Activated CD4-positive, alpha-beta T cell treated with anti-CD3 and anti-CD28 coated beads, Interleukin-2, amount 10 ng/mL, durations not matched to agents 7 days and 5 days (primary cell): ENCODE measurements at regions of chr5 and their contacts with region 1.

Region 1: DNA sequence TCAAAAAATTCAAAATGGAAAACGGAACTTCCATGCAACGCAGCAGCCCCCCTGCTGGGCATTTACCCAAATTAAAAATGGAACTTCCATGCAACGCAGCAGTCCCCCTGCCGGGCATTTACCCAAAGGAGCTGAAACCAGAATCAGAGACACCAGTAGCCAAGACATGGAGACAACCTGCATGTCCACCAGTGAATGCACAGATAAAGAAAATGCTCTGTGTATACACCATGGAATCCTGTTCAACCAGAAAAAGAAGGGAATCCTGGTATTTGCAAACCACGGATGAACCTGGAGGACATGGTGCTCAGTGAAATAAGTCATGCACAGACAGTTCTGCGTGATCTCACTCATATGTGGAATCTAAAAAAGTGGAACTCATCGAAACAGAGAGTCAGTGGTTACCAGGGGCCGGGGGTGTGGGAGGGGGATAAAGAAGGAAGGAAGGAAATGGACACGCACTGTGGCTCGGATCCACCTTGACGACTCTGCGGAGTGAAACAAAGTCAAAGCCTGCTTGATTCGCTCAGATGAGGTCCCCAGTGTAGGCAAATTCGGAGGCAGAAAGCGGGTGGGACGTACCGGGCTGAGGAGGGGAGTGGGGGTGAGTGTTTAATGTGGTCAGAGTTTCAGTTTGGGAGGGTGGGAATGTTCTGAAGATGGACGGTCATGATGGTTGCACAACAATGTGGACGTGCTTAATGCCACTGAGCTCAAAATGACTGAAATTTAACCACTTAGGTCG is 40.2 kb upstream of the EXOC3 start:
- DNase-seq: peak; percentile 4
- H3K4me3 Mint-ChIP-seq: no peak overlapping the region
- H3K27ac Mint-ChIP-seq: peak overlapping the region; percentile 38
- H3K4me1 Mint-ChIP-seq: peaks cover 45% of the 10 kb centered on the region
- H3K27me3 Mint-ChIP-seq: no peaks in the 10 kb centered on the region

Region 2: DNA sequence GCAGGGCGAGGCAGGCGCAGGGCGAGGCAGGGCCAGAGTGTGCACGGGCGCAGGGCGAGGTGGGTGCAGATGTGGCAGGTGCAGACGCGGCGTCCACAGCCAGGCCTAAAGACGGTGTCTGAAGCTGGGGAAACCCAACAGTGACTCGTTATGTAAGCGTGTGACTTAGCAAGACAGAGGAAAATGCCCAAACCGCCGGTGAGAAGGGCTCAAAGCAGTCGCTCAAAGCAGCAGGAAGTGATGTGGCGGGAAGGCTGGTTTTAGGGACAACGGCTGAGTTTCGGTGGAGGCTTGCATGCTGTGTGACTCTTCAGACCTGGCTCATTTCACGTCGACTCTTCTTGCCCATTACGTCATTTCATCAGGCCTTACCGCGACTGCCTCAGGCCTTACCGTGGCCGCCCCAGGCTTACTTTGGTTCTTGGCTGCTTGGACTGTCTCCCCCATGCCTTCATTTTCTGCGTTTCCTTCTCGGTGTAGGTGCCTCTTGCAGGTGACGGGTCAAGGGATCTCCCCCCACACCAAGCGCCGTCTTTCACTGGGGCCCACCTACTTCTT is 10.3 kb before region 1 on chr5:
- CTCF ChIA-PET with region 1: interaction called, 10 read pairs
- POLR2A ChIA-PET with region 1: no interaction called
- DNase-seq: peak; percentile 92
- H3K4me3 Mint-ChIP-seq: peak overlapping the region; percentile 63
- H3K27ac Mint-ChIP-seq: peak overlapping the region; percentile 89
- H3K4me1 Mint-ChIP-seq: peaks cover 57% of the 10 kb centered on the region
- H3K27me3 Mint-ChIP-seq: no peaks in the 10 kb centered on the region

Region 3: DNA sequence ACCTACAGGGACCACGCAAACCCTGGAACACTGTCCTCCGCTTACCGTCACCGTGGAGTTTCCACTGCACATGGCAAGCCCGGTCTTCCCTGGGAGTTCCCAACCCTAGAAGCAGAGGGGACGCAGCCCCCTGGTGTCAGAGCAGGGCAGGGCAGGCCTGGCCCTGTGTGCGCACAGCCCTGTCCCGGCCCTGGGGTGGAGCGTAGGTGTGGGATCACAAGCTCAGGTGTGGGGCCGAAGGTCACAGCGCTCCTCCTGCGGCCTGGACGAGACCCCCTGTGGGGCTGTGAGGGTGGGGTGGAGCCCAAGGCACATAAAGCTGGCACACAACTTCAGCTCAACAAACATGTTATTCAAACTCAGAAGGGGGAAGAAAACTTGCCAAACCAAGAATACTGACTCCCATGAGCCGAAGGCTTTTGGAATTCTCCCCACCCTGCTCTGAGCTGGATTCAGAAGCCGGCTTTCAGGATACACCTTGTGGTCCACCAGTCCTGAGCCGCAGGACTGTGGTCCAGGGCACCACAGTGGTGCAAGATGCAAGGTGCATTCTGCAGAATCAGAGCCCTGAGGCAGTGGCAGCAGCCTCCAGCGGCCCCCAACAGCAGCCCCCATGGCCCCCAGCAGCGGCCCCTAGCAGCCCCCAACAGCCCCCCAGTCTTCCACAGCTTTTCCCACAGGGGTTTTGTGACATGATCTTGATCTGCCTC is 28.4 kb after region 1 on chr5:
- CTCF ChIA-PET with region 1: no interaction called
- POLR2A ChIA-PET with region 1: no interaction called
- DNase-seq: peak; percentile 50
- H3K4me3 Mint-ChIP-seq: no peak overlapping the region
- H3K27ac Mint-ChIP-seq: no peak overlapping the region
- H3K4me1 Mint-ChIP-seq: peaks cover 10% of the 10 kb centered on the region
- H3K27me3 Mint-ChIP-seq: no peaks in the 10 kb centered on the region